ENCODE measurements at regions of chr3 and their contacts with region 1.

Region 1: DNA sequence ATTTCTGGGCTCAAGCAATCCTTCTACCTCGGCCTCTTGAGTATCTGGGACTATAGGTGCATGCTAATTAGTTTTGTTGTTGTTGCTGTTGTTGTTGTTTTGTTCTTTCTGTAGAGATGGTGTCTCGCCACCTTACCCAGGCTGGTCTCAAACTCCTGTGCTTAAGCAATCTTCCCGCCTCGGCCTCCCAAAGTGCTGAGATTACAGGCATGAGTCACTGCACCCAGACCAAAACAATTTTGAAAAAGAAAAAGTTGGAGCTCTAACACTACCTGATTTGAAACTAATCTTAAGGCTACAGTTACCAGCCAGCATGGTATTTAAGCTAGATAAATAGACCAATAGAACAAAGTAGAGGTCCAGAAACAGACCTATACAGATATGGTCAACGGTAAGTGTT is 29.8 kb downstream of the KPNA1 start:
- DNase-seq: no peak
- H3K4me3 Mint-ChIP-seq: no peak overlapping the region
- H3K27ac Mint-ChIP-seq: no peak overlapping the region
- H3K4me1 Mint-ChIP-seq: peaks cover 48% of the 10 kb centered on the region
- H3K27me3 Mint-ChIP-seq: no peaks in the 10 kb centered on the region

Region 2: DNA sequence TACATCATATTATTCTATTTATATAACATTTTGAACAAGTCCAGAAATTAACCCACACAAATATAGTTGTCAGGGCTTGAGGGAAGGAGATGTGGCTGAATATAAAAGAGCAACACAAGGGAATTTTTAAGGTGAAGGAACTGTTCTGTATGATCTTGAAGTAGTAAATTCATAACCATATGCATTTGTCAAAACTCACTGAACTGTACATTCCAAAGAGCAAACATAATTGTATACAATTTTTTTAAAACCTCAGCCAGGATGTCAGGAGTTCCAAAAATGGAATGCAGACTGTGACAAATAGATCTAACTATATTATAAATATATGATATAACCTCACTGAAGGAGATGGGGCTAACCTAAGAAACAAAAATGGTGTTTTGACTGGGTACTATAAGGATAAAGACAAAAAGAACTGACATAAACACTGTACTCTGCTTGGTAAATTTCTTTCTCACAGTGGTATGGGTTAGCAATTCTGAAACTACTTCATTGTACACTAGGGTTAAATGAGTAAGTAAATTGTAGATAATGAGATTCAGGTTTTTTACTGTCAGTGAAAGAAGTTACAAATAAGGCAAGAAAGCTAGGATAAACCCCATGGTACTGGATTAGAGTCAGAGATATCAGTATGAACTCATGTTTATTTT is 749.8 kb before region 1 on chr3:
- intact Hi-C with region 1: loop called (anchors 1 kb)
- DNase-seq: no peak
- H3K4me3 Mint-ChIP-seq: no peak overlapping the region
- H3K27ac Mint-ChIP-seq: peak overlapping the region; percentile 36
- H3K4me1 Mint-ChIP-seq: peaks cover 41% of the 10 kb centered on the region
- H3K27me3 Mint-ChIP-seq: no peaks in the 10 kb centered on the region

Region 3: GRCh38 chr3:122365073-122365472 is 119.9 kb before region 1 on chr3:
- intact Hi-C with region 1: loop called (anchors 1 kb)
- DNase-seq: no peak
- H3K4me3 Mint-ChIP-seq: peak overlapping the region; percentile 42
- H3K27ac Mint-ChIP-seq: peak overlapping the region; percentile 91
- H3K4me1 Mint-ChIP-seq: peaks cover 47% of the 10 kb centered on the region
- H3K27me3 Mint-ChIP-seq: no peaks in the 10 kb centered on the region

Region 4: GRCh38 chr3:122427857-122428471 is 57.0 kb before region 1 on chr3:
- intact Hi-C with region 1: loop called (anchors 1 kb)
- DNase-seq: no peak
- H3K4me3 Mint-ChIP-seq: no peak overlapping the region
- H3K27ac Mint-ChIP-seq: peak overlapping the region; percentile 61
- H3K4me1 Mint-ChIP-seq: peaks cover 18% of the 10 kb centered on the region
- H3K27me3 Mint-ChIP-seq: no peaks in the 10 kb centered on the region

Region 5: DNA sequence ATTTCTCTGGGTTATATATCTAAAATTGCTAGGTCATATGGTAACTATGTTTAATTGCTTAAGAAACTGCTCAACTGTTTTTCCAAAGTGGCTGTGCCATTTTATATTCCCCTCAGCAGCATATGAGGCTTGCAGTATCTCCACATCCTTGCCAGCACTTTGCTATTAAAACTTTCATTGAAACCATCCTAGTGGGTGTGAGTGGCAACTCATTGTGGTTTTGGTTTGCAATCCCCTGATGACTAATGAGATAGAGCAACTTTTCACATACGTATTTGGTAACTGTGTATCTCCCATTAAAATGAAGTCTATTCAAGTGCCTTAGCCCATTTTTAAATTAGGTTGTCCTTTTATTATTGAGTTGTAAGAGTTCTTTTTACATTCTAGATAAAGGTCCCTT is 12.4 kb after region 1 on chr3:
- intact Hi-C with region 1: loop called (anchors 1 kb)
- DNase-seq: peak; percentile 14
- H3K4me3 Mint-ChIP-seq: peak overlapping the region; percentile 17
- H3K27ac Mint-ChIP-seq: no peak overlapping the region
- H3K4me1 Mint-ChIP-seq: peaks cover 43% of the 10 kb centered on the region
- H3K27me3 Mint-ChIP-seq: no peaks in the 10 kb centered on the region

Region 6: GRCh38 chr3:122533931-122534334 is 48.9 kb after region 1 on chr3:
- intact Hi-C with region 1: loop called (anchors 1 kb)
- DNase-seq: peak; percentile 46
- H3K4me3 Mint-ChIP-seq: no peak overlapping the region
- H3K27ac Mint-ChIP-seq: peak overlapping the region; percentile 80
- H3K4me1 Mint-ChIP-seq: peaks cover 60% of the 10 kb centered on the region
- H3K27me3 Mint-ChIP-seq: no peaks in the 10 kb centered on the region

Region 7: DNA sequence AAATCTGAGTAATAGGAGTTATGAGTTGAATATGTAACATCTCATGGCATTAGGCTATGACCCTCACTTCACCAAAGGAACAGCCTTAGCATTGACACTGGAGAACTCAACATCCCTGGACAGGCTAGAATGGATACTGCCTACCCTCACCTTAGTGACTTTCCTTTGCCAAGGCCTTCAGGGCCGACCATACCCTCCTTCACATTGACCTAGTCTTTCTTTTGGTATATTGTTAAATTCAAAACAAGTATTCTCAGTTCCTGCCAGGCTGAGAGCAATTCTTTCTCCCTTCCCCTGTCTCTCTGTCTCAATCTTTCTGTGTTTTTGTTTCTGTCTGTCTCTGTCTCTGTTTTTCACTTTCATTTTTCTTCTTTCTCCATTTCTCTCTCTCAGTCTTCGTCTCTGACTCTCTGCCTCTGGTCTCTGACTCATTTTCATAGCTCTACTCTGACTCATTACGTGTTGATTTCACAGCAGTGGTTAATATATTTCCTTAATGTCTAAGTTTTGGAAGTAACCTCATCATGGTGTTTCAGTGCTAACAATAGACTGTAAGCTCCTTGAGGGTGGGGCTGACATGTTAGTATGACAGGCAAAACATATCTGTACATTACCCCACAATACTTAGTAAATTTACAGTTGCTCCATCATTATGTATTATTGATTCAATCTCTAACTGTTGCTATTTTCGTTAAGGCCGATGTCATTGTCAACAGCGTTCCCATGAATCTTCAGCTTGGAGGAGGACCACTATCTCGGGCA is 125.0 kb after region 1 on chr3:
- intact Hi-C with region 1: loop called (anchors 1 kb)
- DNase-seq: peak; percentile 31
- H3K4me3 Mint-ChIP-seq: peak overlapping the region; percentile 58
- H3K27ac Mint-ChIP-seq: peak overlapping the region; percentile 89
- H3K4me1 Mint-ChIP-seq: peaks cover 20% of the 10 kb centered on the region
- H3K27me3 Mint-ChIP-seq: no peaks in the 10 kb centered on the region

Measured in activated T-helper 1 cell treated with anti-CD3 and anti-CD28 coated beads, Interleukin-12 subunit alpha, Interleukin-12 subunit beta, Interleukin-2, Interleukin-4 antibody, amounts not matched to agents 30 ng/mL and 10 ng/mL and 1 ng/mL, durations not matched to agents 14 hours and 24 hours and 36 hours (primary cell).